ENCODE measurements at regions of chr1 and their contacts with region 1.

Region 1: DNA sequence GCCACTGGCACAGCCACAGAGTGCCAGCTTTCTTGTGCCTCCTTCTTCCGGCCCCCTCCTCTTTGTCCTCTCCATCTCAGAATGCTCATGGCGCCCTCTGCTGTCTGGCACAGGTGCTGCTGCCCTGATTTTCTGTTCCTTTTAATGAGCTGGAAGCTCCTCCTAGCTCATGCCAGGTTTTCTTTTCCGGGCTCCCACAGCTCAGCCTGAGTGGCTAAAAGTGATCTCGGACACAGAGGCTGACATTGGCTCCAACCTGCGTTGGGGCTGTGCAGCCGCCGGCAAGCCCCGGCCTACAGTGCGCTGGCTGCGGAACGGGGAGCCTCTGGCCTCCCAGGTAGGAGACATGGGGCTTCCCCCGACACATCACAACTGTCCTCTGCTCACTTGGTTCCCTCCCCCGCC is 18.7 kb downstream of the CNTN2 start:
- DNase-seq: peak; percentile 91
- H3K4me3 ChIP-seq: no peak overlapping the region; a peak in 1 of 4 replicates
- H3K27ac ChIP-seq: no peak overlapping the region
- H3K4me1 ChIP-seq: peaks cover 0 to 5% of the 10 kb centered on the region in 2 experiments; a peak in 1 of 4 replicates
- H3K27me3 ChIP-seq: no peaks in the 10 kb centered on the region
- CTCF ChIP-seq: peak; percentile 96
- EP300 ChIP-seq: no peak
- RAD21 ChIP-seq: peak; percentile 92

Region 2: DNA sequence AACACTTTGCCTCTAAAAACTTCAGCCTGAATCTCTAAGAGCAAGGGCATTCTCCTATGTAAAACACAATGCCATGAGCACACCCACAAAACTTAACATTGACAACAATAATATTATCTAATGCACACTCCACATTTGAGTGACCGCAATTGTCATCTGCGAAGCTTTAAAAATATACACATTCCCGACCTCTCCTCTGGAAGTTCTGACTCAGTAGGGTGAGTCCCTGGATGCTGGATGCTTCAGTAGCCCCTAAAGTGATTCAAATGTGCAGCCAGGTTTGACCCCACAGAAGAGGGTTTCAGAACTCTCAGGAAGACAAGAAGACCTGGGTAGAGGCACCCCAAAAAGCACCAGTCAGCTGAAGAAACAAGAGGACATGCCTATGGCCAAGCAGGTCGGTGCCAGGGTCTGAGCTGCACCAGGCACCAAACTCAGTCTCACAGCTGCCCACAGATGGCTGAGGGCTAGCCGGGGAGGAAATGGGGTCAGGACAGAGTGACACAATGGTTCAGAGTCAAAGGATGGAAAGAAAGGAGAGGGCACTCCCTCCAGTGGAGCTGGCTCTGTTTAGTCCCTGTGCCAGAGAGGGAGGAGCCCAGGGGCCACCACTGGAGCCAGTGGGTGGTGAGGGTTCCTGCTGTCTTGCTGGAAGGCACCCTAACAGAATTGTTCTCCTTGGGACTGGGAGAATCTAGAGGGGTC is 584.5 kb before region 1 on chr1:
- CTCF ChIA-PET with region 1: no interaction called
- POLR2A ChIA-PET with region 1: no interaction called
- DNase-seq: no peak
- H3K4me3 ChIP-seq: no peak overlapping the region
- H3K27ac ChIP-seq: no peak overlapping the region
- H3K4me1 ChIP-seq: peaks cover 0 to 19% of the 10 kb centered on the region in 2 experiments; a peak in 3 of 4 replicates
- H3K27me3 ChIP-seq: no peaks in the 10 kb centered on the region
- CTCF ChIP-seq: no peak
- EP300 ChIP-seq: no peak
- RAD21 ChIP-seq: no peak

Region 3: DNA sequence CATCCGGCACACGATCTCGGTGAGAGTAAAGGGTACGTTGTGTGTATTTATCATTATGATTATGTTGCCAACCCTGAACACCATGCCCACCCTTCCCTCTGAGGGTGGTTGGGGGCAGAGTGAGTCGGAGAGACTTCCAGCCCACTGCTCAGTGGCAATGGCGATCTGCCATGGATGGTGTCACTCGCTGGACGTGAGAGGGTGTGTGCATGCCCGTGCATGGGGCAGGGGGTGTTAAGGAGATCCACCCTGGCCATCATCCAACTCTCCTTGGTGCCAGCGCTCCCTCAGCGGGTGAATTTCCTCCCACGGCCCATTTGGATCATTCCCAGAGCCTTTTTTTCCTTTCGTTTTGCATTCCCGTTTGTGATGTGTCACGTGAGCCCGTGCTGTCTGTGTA is 92.7 kb before region 1 on chr1:
- CTCF ChIA-PET with region 1: interaction called, 107 read pairs
- POLR2A ChIA-PET with region 1: interaction called, 3 read pairs
- DNase-seq: no peak
- H3K4me3 ChIP-seq: no peak overlapping the region
- H3K27ac ChIP-seq: no peak overlapping the region
- H3K4me1 ChIP-seq: peaks cover 0 to 11% of the 10 kb centered on the region in 2 experiments; a peak in 2 of 4 replicates
- H3K27me3 ChIP-seq: no peaks in the 10 kb centered on the region
- CTCF ChIP-seq: no peak
- EP300 ChIP-seq: no peak
- RAD21 ChIP-seq: no peak

Region 4: DNA sequence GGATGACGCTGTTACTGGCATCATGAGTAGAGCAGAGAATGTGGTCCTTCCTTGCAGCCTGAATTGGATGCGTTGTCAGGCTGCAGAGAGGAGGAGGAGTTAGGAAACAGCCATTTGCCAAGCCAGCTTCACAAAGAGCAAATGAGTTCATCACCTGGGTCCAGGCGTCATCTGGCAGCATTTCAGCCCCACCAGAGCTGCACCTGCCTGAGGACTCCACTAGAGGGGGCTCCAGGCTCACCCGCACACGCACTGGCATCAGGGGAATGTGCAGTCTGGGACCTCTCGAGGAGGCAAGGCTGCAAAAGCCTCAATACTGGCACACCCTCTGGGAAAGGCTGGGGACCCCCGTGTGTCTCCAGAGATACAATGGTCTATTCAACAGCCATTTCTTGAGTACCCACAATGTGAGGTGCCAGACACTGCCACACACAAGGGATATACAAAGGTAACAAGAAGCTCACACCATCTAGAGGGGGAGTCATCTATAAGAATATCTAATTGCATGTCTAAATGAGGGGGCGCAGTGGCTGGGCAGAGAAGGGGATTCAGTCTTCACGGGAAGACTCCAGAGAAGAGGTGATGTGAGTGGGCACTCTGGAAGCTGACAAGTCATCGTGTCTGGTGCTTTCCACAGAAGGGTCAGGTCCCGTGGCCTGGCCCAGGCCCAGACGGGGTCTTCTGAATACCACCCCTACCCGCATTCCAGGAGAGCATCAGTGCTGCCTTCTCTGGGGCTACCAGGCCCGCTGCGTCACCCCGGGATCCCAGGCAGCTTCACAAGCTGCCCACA is 72.2 kb before region 1 on chr1:
- CTCF ChIA-PET with region 1: interaction called, 756 read pairs
- POLR2A ChIA-PET with region 1: interaction called, 7 read pairs
- DNase-seq: peak; percentile 95
- H3K4me3 ChIP-seq: no peak overlapping the region; a peak in 1 of 4 replicates
- H3K27ac ChIP-seq: no peak overlapping the region
- H3K4me1 ChIP-seq: peaks cover 0 to 2% of the 10 kb centered on the region in 2 experiments; a peak in 2 of 4 replicates
- H3K27me3 ChIP-seq: no peaks in the 10 kb centered on the region
- CTCF ChIP-seq: peak; percentile 98
- EP300 ChIP-seq: no peak
- RAD21 ChIP-seq: peak; percentile 99

Region 5: GRCh38 chr1:205042911-205043806 is 18.5 kb before region 1 on chr1 and contains the start of gene CNTN2:
- CTCF ChIA-PET with region 1: interaction called, 92 read pairs
- POLR2A ChIA-PET with region 1: no interaction called
- DNase-seq: peak; percentile 93
- H3K4me3 ChIP-seq: no peak within 1 kb of the TSS; a peak in 1 of 4 replicates
- H3K27ac ChIP-seq: no peak within 1 kb of the TSS
- H3K4me1 ChIP-seq: peaks cover 0 to 7% of the 10 kb centered on the region in 2 experiments; a peak in 1 of 4 replicates
- H3K27me3 ChIP-seq: peaks cover 60% of the 10 kb centered on the region
- CTCF ChIP-seq: no peak
- EP300 ChIP-seq: no peak
- RAD21 ChIP-seq: no peak
- polyA plus RNA-seq, gene CNTN2: 0.02 and 0.03 TPM in 2 replicates

Region 6: DNA sequence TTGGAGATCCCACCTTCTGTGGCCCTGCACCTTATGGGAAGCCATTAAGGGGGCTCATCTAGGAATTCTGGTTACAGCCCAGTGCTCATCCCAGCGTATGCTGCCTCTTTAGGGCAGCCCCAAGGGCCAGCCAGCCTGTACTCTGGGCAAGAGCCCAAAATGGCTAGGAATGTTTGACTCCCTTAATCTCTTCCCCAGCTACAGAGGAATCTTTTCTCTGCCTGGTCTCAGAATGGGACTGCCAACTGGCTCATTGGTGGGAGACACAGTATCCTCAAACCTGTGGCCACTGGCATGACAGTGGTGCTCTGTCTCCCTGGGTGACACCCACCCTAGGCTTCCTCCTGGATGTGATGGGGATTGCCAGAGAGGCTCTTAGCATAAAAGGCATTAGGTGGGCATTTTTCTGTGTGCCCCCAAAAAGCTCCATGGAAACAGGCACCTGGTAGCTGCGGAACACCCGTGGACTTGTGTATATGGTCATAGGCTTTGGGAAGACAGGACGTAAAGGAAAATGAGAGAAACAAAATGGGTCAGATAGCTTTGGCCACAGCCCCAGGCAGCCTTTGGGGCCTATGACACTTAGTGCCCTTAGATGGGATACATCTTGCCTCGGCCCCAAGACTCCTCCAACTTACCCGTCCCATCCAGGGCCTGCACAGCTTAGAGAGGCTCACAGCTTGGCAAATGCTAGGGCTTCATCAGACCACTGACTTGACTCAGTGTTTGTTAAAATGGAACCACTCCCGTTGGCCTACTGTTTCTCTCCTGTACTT is 15.7 kb after region 1 on chr1:
- CTCF ChIA-PET with region 1: interaction called, 74 read pairs
- POLR2A ChIA-PET with region 1: no interaction called
- DNase-seq: no peak
- H3K4me3 ChIP-seq: no peak overlapping the region; a peak in 1 of 4 replicates
- H3K27ac ChIP-seq: no peak overlapping the region
- H3K4me1 ChIP-seq: no peaks in the 10 kb centered on the region; a peak in 1 of 4 replicates
- H3K27me3 ChIP-seq: no peaks in the 10 kb centered on the region
- CTCF ChIP-seq: no peak
- EP300 ChIP-seq: no peak
- RAD21 ChIP-seq: no peak

Region 7: DNA sequence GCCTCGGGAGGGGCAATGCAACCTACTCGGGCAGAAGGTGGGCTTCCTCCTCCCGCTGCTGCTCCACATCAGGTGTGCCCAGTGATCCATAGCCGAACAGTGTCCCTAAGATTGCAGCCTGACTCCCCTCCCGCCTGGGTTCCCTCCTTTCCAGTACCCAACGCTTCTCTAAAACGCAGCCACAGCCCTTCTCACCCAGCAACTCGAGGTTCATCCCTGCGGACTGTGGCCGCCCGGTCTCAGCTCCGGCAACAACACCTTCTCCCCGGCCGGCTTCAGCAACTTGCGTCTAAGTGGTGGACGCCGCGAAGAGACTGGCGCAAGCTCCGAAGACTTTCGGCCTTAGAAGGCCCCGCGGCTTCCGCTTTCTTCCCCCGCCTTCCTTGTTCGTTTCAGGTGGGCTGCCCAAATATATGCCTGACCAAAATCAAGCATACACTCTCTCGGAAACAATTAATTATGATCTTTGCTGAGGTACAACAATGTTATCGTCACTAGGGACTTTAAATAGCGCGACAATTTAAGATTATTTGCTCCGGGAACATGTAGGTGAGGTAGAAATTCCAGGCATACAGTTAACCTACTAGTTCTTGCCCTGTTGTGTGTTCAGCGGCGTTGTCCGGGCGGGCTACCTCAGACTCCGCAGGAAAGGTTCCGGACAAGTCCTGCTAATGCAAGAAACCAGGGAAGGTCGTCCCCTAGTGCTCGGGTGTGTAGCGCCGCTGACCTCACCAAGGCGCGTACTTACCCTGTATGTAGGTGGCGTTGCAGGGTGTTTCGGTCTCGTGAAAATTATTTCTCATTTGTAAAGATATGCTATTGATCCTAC is 60.2 kb after region 1 on chr1 and contains the start of gene RBBP5:
- CTCF ChIA-PET with region 1: interaction called, 16 read pairs
- POLR2A ChIA-PET with region 1: no interaction called
- DNase-seq: peak; percentile 84
- H3K4me3 ChIP-seq: peak within 1 kb of the TSS; percentile 80 to 92
- H3K27ac ChIP-seq: peak within 1 kb of the TSS; percentile 87 to 96
- H3K4me1 ChIP-seq: peaks cover 11 to 17% of the 10 kb centered on the region in 2 experiments; a peak in 3 of 4 replicates
- H3K27me3 ChIP-seq: no peaks in the 10 kb centered on the region
- CTCF ChIP-seq: peak; percentile 84
- EP300 ChIP-seq: peak in 1 of 2 experiments; percentile 36; a peak in 1 of 4 replicates
- RAD21 ChIP-seq: peak; percentile 55
- polyA plus RNA-seq, gene RBBP5: 5.7 and 7.7 TPM in 2 replicates

Region 8: GRCh38 chr1:205133287-205133686 is 71.6 kb after region 1 on chr1:
- CTCF ChIA-PET with region 1: no interaction called
- POLR2A ChIA-PET with region 1: no interaction called
- DNase-seq: no peak
- H3K4me3 ChIP-seq: no peak overlapping the region
- H3K27ac ChIP-seq: no peak overlapping the region
- H3K4me1 ChIP-seq: no peaks in the 10 kb centered on the region
- H3K27me3 ChIP-seq: no peaks in the 10 kb centered on the region
- CTCF ChIP-seq: no peak
- EP300 ChIP-seq: no peak
- RAD21 ChIP-seq: no peak

Region 9: DNA sequence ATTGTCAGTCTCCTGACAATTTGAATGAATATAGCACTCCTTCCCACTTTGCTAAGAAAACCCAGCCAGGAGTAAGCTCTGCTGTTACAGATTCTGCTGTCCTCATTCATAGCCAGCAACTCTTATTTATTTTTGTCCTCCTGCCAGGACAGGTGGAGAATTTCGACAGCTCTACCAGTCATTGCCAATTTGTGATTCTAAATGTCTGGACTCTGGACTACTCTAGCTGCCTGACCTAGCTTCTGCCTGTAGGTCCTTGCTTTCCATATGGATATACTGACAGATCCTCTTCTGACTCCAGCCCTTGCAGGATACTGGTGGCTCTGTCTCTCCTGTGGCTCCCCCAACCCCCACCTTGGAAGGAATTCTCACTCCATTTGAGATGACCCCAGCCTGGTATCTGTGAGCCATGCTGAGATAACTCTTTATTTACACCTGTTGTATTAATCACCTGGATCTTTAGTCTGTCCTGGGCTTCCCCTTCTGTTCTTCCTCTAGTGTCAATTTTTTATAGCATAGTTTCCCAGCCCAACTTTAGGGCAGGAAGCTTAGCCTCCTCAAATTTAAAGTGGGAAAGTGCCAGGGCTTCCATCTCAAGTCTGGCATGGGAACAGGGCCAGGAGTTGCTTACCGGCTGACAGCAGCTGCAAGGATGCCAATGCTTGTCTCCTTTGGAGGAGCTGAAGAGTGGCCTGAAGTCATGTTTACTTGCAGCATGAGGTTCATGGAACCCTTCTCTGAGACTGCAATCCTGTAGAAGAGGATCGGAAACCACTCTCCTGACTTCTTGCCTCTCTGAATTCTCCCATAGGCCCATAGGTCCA is 781.6 kb after region 1 on chr1:
- CTCF ChIA-PET with region 1: no interaction called
- POLR2A ChIA-PET with region 1: no interaction called
- DNase-seq: no peak
- H3K4me3 ChIP-seq: no peak overlapping the region
- H3K27ac ChIP-seq: no peak overlapping the region
- H3K4me1 ChIP-seq: peaks cover 0 to 12% of the 10 kb centered on the region in 2 experiments; a peak in 1 of 4 replicates
- H3K27me3 ChIP-seq: no peaks in the 10 kb centered on the region
- CTCF ChIP-seq: no peak
- EP300 ChIP-seq: no peak
- RAD21 ChIP-seq: no peak

Measured in SK-N-SH (cell line).